Activated T-helper 1 cell treated with anti-CD3 and anti-CD28 coated beads, Interleukin-12 subunit alpha, Interleukin-12 subunit beta, Interleukin-2, Interleukin-4 antibody, amounts not matched to agents 30 ng/mL and 10 ng/mL and 1 ng/mL, durations not matched to agents 14 hours and 24 hours and 36 hours (primary cell): ENCODE measurements at regions of chr2 and their contacts with region 1.

Region 1: DNA sequence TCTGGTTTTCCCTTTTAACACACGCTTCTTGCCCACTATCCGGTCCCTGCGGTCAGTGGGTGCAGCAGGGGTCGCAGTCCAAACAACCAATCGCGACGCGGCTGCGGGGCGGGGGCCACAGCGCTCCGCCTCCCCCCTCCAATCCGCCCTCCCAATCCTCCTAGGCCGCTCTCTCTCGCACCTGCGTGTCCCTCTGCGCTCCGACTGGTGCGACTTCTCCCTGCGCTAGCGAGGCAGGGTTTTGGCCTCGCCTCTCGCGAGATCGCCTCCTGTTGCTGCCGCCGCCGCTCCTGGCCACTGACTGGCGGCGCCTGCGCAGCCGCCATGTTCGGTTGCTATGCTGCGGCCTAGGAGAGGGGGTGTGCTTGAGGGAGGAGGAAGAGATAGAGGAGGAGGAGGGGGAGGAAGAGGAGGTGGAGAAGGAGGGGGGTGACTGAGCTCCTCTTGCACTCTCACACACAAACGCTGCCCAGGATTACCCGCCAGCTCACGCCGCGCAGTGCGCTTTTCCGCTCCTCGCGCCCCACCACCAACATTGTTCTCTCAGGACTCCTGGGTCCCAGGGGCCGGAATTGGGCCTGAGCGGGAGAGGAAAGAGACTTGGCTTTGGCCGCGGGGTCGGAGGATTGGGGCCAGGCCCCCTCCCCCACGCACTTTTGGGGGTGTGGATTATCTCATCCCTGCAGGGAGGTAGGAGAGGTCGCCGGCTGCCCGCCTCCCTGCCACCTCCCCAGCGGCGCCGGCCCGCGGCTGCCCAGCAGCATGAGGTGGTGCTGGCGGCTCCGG is at the start of gene PTPN4:
- DNase-seq: peak; percentile 95
- H3K4me3 Mint-ChIP-seq: peak within 1 kb of the TSS; percentile 90
- H3K27ac Mint-ChIP-seq: peak within 1 kb of the TSS; percentile 94
- H3K4me1 Mint-ChIP-seq: peaks cover 53% of the 10 kb centered on the region
- H3K27me3 Mint-ChIP-seq: peaks cover 3% of the 10 kb centered on the region
- total RNA-seq, gene PTPN4: 24.5 and 28.3 TPM in 2 replicates

Region 2: GRCh38 chr2:118842661-118843482 is 916.8 kb before region 1 on chr2:
- intact Hi-C with region 1: no loop called
- DNase-seq: no peak
- H3K4me3 Mint-ChIP-seq: no peak overlapping the region
- H3K27ac Mint-ChIP-seq: no peak overlapping the region
- H3K4me1 Mint-ChIP-seq: no peaks in the 10 kb centered on the region
- H3K27me3 Mint-ChIP-seq: peaks cover 68% of the 10 kb centered on the region

Region 3: DNA sequence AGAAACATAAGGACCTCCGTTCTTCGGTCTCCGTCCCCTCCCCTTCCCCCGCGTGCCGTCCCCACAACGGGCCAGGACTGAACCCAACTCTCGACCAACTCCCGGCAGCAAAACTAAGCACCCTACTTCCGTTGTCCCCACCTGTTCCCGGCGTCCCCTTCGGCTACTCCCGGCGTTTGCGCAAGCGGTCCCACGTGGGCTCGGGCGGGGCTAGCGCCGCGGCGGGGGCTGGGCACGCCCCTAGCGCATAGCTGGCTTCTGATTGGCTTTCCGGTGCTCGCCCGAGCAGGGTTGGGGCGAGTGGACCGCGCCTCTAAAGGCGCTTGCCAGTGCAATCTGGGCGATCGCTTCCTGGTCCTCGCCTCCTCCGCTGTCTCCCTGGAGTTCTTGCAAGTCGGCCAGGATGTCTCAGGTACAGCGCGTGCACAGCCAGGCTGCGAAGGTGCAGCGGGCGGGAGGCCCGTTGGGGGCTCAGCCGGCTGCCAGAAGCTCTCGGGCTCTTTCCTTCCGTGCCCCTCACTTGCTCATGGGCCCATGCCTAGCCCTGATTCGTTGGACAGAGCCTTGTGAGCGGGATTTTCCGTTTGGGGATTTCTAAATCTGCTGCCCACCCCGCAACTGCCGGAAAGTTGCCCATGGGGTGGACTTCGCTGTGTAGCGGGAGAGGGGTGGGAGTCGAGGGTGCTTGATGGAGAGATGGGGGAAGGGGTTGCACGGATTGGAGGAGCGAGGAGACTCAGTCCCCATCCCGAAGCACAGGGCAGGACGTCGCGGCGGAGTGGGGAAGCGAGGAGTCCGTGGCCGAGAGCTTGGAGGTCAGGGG is 392.8 kb before region 1 on chr2 and contains the starts of genes C2orf76 and DBI:
- intact Hi-C with region 1: loop called (anchors 1 kb)
- DNase-seq: peak; percentile 93
- H3K4me3 Mint-ChIP-seq: peak within 1 kb of the TSS; percentile 99
- H3K27ac Mint-ChIP-seq: peak within 1 kb of the TSS; percentile 99
- H3K4me1 Mint-ChIP-seq: peaks cover 46% of the 10 kb centered on the region
- H3K27me3 Mint-ChIP-seq: no peaks in the 10 kb centered on the region
- total RNA-seq, gene C2orf76: 10.3 and 10.7 TPM in 2 replicates
- total RNA-seq, gene DBI: 142 and 146 TPM in 2 replicates

Region 4: GRCh38 chr2:119826370-119826961 is 66.8 kb after region 1 on chr2:
- intact Hi-C with region 1: loop called (anchors 2 kb)
- DNase-seq: peak; percentile 19
- H3K4me3 Mint-ChIP-seq: no peak overlapping the region
- H3K27ac Mint-ChIP-seq: no peak overlapping the region
- H3K4me1 Mint-ChIP-seq: peaks cover 17% of the 10 kb centered on the region
- H3K27me3 Mint-ChIP-seq: no peaks in the 10 kb centered on the region

Region 5: DNA sequence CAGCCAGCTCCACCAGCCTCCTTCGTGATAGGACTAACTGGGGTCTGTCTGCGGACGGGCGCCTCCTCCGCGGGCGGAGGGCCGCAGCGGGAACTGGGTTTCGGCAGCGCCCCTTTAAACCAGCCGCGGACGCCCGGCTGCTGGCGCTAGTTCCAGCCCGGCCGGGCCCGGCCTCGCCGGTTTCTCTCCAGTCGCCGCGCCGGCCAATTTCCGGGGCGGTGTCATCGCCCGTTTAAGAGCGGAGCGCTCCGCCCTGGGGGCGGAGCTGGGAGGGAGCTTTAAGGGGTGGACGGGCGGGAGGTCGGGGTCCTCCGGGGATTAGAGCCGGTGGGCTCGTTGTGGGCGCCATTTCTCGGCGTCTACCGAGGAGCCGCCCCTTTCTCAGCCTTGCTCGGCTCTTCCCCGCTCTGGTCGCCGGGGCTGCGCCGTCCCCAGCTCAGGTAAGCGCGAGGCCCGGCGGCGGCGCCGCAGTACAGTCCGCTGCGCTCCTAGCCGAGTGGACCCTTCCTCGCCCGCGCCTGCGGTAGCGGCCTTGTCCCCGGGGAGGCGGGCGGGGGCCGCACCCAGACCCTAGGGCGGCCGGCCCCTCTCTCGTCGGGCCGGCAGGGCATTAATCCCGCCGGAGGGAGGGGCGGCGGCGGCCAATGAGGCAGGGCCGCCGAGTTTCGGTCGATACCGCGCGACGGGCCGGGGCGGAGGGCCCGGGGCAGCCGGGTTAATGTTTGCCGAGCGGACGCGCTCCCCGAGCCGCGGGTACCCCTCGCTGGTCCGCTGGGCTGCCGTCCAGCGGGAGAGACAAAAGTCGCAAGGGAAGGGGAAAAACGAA is 253.3 kb after region 1 on chr2 and contains the start of gene EPB41L5:
- intact Hi-C with region 1: loop called (anchors 1 kb)
- DNase-seq: peak; percentile 75
- H3K4me3 Mint-ChIP-seq: peak within 1 kb of the TSS; percentile 78
- H3K27ac Mint-ChIP-seq: no peak within 1 kb of the TSS
- H3K4me1 Mint-ChIP-seq: peaks cover 7% of the 10 kb centered on the region
- H3K27me3 Mint-ChIP-seq: peaks cover 11% of the 10 kb centered on the region
- total RNA-seq, gene EPB41L5: 1.2 TPM in 2 replicates

Region 6: DNA sequence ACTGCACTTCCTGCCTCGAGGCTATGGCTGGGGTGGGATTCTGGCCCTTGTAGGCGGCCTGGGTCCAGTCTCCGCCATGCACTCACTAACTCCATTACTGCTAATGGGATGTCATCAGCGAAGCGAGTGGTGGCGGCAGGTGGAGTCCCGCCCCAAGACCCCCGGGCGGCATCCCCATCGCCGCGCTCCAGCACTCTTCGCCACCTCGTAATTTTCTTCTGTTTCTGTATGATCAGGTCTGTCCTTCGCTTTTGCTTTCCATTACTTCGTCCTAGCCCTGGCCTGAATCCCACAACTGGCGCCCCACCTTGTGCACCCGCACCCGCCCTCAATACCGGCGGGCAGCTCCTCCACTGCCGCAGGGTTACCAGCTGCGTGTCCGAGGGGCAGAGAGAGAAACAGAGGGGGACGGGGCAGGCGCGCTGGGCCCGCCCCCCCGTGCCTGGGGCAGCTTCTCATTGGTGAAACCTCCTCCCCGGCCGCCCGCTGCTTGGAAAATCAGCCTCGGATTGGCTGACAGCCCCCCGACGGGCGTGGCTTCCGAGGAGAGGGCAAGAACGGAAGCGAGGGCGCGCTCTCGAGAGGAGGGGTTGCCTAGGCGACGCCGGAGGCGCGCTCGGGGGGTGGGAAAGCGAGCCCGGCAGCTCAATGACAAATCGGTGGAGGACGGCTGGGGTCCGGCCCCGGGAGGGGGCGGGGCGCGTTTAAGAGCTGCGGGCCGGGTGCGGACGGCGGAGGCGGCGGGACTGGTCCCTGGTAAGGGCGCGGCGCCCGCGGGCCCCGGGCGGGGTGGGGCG is 492.8 kb after region 1 on chr2 and contains the start of gene RALB:
- intact Hi-C with region 1: loop called (anchors 1 kb)
- DNase-seq: peak; percentile 99
- H3K4me3 Mint-ChIP-seq: peak within 1 kb of the TSS; percentile 98
- H3K27ac Mint-ChIP-seq: peak within 1 kb of the TSS; percentile 95
- H3K4me1 Mint-ChIP-seq: peaks cover 85% of the 10 kb centered on the region
- H3K27me3 Mint-ChIP-seq: peaks cover 10% of the 10 kb centered on the region
- total RNA-seq, gene RALB: 79.7 and 84.2 TPM in 2 replicates

Region 7: DNA sequence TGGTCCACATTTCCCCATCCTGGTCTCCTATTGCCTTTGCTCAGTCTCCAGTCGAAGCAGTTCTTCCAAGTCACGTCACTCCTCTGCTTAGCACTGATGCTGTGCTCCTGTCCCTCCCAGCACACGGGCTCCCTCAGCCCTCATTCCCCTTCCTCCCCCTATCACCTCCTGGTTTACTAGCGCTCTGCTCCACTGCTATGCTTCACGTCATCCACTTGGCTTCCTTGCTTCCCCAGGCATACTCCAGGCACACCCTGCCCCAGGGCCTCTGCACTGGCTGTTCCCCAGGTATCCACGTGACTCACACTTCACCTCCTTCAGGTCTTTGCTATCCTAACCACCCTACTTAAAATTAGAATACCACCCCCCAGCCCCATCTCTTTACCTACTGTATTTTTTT is 1245.3 kb after region 1 on chr2:
- intact Hi-C with region 1: no loop called
- DNase-seq: no peak
- H3K4me3 Mint-ChIP-seq: no peak overlapping the region
- H3K27ac Mint-ChIP-seq: no peak overlapping the region
- H3K4me1 Mint-ChIP-seq: no peaks in the 10 kb centered on the region
- H3K27me3 Mint-ChIP-seq: no peaks in the 10 kb centered on the region